PC-3 (cell line): ENCODE measurements at regions of chr11 and their contacts with region 1.

Region 1: DNA sequence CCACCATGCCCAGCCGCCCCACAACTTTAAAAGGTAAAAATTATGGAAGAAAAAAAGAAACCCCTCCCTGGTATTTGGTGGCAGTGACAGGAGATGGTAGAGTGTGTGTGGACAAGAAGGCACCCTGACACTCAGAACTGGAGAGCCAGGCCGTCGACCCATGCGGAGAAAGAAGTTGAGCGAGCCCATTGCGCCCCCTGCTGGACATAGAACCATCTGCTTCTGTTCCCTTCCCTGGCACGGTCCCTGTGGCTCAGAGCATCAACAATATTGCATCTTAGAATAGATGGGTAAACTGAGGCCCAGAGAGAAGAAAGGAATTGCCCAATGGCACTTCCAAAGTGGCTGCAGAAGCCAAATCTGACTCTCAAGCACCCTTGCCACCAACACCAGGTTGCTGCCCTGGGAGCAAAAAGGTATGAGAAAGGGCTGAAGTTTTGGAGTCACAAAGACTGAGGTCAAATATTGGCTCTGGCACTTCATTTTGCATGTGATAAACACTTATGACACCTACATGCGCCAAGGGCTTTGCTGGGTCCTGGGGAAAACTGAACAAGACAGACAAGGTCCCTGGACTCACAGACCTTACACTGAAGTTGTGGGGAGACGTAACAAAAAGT is 8.6 kb downstream of the MRPL11 start:
- DNase-seq: peak; percentile 80
- ATAC-seq: peak; percentile 96
- H3K4me3 ChIP-seq: no peak overlapping the region
- H3K27ac ChIP-seq: no peak overlapping the region
- H3K4me1 ChIP-seq: no peaks in the 10 kb centered on the region
- H3K27me3 ChIP-seq: no peaks in the 10 kb centered on the region
- CTCF ChIP-seq: peak; percentile 94

Region 2: DNA sequence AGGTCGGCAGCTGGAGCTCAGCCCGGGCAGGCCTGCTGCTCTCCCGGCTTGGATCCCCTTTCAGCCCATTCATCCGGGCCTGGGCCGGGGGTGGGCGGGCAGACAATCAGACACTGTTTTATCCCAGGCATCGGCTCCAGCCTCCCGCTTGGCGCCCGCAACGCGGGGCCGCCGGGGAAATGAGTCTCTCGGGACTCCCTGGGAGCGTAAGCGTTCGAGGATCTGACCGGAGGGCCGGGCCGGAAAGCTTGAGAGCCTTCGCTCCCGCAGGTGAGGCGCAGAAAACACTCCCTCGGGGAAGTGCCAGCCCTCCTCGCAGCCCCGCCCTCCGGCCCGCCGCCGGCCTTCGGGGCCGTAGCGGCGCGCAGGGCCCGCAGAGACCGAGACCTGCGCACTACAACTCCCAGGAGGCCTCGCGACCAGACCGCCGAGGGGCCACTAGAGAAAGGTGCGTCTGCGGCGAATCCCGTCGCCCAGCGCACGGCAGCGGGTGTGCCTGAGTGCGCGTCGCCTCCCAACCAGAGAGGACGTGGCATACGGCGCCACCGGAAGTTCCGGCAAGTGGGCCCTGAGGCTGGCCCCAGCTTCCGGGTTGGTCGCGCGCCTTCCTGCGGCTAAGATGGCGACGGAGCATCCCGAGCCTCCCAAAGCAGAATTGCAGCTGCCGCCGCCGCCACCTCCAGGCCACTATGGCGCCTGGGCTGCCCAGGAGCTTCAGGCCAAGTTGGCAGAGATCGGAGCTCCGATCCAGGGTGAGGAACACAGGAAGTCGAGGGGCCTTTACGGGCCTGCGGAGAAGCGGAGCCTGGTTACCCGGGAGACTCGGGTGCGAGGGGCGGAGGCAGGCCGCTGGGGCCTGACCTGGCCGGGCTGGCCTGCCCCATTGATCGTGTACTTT is 378.1 kb before region 1 on chr11 and contains the start of gene SF3B2:
- CTCF ChIA-PET with region 1: no interaction called
- POLR2A ChIA-PET with region 1: interaction called, 16 read pairs
- intact Hi-C with region 1: no loop called
- DNase-seq: peak; percentile 99
- ATAC-seq: peak; percentile 99
- H3K4me3 ChIP-seq: peak within 1 kb of the TSS; percentile 93
- H3K27ac ChIP-seq: peak within 1 kb of the TSS; percentile 49
- H3K4me1 ChIP-seq: peaks cover 18% of the 10 kb centered on the region
- H3K27me3 ChIP-seq: no peaks in the 10 kb centered on the region
- CTCF ChIP-seq: no peak
- total RNA-seq, gene SF3B2: 241 and 318 TPM in 2 replicates

Region 3: DNA sequence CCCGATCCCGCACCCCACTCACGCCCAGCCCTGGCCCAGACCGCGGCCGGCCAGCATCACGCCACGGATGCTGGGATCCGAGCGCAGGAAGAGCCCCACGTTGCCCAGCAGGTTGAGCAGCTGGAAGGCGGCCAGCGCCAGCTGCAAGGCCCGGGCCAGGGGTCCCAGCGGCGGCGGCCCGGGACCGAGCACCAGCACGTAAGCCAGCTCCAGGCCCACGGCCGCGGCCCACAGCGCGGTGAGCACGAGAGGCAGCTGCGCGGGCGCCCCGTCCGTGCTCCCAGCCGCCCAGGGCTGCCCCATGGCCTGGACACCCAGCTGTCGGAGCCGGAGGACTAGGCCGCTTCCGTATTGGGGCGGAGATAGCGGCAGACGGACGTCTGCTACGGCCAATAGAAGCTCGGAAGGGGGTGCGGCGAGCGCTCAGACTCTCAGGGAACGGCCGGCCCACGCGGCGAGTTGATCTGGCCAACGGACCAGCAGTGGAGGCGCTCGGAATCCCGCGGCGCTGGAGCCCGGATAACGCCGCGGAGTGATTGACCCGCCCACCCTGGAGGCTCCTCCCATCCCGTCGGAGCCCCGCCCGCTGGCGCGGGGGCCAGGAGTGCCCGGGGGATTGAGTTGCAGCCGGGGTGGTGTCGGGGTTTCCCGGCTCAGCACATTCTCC is 115.7 kb after region 1 on chr11 and contains the start of gene ZDHHC24:
- CTCF ChIA-PET with region 1: interaction called, 17 read pairs
- POLR2A ChIA-PET with region 1: no interaction called
- intact Hi-C with region 1: no loop called
- DNase-seq: peak; percentile 99
- ATAC-seq: peak; percentile 96
- H3K4me3 ChIP-seq: peak within 1 kb of the TSS; percentile 89
- H3K27ac ChIP-seq: 0 out of 2 replicates have a peak within 1 kb of the TSS, but pooled peaks have one; percentile 10
- H3K4me1 ChIP-seq: peaks cover 21% of the 10 kb centered on the region
- H3K27me3 ChIP-seq: no peaks in the 10 kb centered on the region
- CTCF ChIP-seq: no peak
- total RNA-seq, gene ZDHHC24: 15.1 and 19.7 TPM in 2 replicates